IMR-90 (cell line): ENCODE measurements at regions of chr20 and their contacts with region 1.

Region 1: DNA sequence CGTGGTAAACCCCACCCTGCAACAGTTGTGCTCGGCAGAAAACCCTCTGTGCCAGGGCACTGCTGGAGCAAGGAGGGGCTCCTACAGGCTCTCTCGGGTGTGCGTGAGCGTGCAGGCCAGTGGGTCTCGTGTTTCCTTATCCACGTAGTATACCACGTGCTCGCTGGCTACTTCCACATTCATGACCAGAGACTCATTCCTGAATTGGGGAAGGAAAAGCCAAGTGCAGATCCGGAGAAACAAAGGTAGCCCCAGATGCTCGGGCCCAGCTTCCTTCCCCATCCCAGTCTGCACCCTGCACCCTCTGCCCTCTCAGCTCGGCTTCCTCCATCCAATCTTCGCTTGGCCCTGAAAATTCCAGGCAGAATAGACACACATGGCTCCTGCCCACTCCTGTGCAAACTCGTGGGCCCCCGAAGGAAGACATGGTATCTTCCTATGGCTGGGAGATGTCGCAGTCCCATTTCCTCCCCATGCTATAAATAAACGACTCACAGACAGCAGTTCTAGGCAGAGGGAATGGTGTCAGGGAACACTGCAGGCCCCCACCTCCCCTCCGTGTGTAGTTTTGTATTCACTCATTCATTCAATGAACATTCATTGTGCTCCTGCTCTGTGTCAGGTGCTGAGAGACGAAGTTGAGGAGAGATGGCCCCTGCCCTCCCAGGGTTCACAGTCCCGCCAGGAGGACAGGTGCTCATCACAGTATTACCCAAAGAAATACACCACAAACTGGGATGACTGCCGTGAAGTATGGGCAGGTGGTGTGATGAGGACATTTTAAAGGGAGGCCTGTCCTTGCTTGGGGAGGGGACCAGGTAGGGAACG is 29.6 kb downstream of the NPEPL1 start:
- DNase-seq: no peak
- ATAC-seq: no peak
- H3K4me3 ChIP-seq: no peak overlapping the region
- H3K27ac ChIP-seq: no peak overlapping the region
- H3K4me1 ChIP-seq: no peaks in the 10 kb centered on the region
- H3K27me3 ChIP-seq: peaks cover 37% of the 10 kb centered on the region
- CTCF ChIP-seq: no peak
- POLR2A ChIP-seq: no peak
- RAD21 ChIP-seq: no peak

Region 2: DNA sequence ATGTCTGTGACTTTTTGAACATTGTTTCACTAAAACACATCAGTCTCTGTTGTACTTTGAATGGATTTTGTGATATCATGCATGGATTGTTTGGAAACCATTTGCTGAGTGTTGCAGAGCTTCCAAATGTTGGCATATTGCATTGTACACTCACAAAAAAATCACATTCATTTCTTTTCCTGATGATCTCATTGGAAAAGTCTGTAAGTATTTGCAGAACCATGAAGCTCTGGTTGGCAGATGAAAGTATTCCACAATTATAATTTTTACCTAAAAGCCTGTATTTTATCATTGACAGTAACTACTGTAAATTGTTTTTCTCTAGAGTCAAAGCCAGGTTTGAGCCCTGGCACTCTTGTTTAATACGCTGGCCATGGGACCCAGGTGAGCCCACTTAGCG is 291.0 kb before region 1 on chr20:
- CTCF ChIA-PET with region 1: no interaction called
- POLR2A ChIA-PET with region 1: no interaction called
- dilution Hi-C with region 1: no loop called
- in situ Hi-C with region 1: no loop called
- intact Hi-C with region 1: no loop called
- DNase-seq: peak; percentile 55
- ATAC-seq: peak; percentile 39; the same call in 1 of the 2 replicates
- H3K4me3 ChIP-seq: no peak overlapping the region
- H3K27ac ChIP-seq: no peak overlapping the region
- H3K4me1 ChIP-seq: peaks cover 21% of the 10 kb centered on the region
- H3K27me3 ChIP-seq: no peaks in the 10 kb centered on the region
- CTCF ChIP-seq: no peak
- POLR2A ChIP-seq: no peak
- RAD21 ChIP-seq: no peak

Region 3: GRCh38 chr20:58504566-58504965 is 217.6 kb before region 1 on chr20:
- CTCF ChIA-PET with region 1: no interaction called
- POLR2A ChIA-PET with region 1: no interaction called
- dilution Hi-C with region 1: no loop called
- in situ Hi-C with region 1: no loop called
- intact Hi-C with region 1: no loop called
- DNase-seq: no peak
- ATAC-seq: no peak
- H3K4me3 ChIP-seq: no peak overlapping the region
- H3K27ac ChIP-seq: no peak overlapping the region
- H3K4me1 ChIP-seq: no peaks in the 10 kb centered on the region
- H3K27me3 ChIP-seq: no peaks in the 10 kb centered on the region
- CTCF ChIP-seq: no peak
- POLR2A ChIP-seq: no peak
- RAD21 ChIP-seq: no peak

Region 4: DNA sequence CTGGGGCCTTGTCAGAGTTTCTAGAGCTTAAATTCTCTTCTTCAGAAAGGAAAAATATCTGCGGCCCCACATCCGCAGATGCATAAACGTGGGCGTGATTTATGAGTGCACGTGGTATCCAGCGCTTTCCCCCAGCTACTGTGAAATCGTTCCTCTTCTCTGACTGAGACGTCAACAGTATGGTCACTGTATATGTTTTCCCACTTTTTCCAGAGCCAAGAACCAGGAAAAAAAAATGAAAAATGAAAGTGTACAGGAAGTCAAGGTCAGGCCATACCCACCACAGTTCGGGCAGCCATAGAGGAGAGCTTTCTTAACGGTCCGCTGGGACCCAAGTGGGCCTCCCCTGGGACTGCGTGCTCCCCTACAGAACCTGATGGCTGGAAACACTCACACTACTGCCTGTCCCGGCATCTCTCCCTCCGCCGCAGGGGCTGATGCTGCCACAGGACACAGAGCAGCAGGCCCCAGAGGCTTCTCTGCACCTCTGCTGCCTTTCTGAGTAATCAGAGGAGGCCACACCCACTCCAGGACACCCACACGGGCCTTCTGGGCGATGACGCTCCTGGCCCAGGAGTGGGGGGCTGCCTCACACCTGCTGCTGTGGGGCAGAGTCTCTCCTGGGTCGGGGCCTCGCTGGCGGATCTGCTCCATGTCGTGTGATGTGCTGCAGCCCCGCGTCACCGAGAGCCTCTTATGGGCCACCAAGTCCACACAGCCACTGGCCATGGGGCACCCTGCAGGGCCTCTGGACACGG is 87.5 kb before region 1 on chr20:
- CTCF ChIA-PET with region 1: no interaction called
- POLR2A ChIA-PET with region 1: no interaction called
- dilution Hi-C with region 1: no loop called
- in situ Hi-C with region 1: no loop called
- intact Hi-C with region 1: no loop called
- DNase-seq: peak; percentile 92
- ATAC-seq: peak; percentile 73
- H3K4me3 ChIP-seq: no peak overlapping the region
- H3K27ac ChIP-seq: peak overlapping the region; percentile 36
- H3K4me1 ChIP-seq: peaks cover 16% of the 10 kb centered on the region
- H3K27me3 ChIP-seq: no peaks in the 10 kb centered on the region
- CTCF ChIP-seq: no peak
- POLR2A ChIP-seq: peak; percentile 33
- RAD21 ChIP-seq: 0 out of 2 replicates have a peak, but pooled peaks have one; percentile 15

Region 5: GRCh38 chr20:58705567-58705926 is 16.6 kb before region 1 on chr20:
- CTCF ChIA-PET with region 1: no interaction called
- POLR2A ChIA-PET with region 1: no interaction called
- dilution Hi-C with region 1: no loop called
- in situ Hi-C with region 1: no loop called
- intact Hi-C with region 1: loop called (anchors 1 kb)
- DNase-seq: no peak
- ATAC-seq: no peak
- H3K4me3 ChIP-seq: no peak overlapping the region
- H3K27ac ChIP-seq: no peak overlapping the region
- H3K4me1 ChIP-seq: peaks cover 2% of the 10 kb centered on the region; the same call in 1 of the 2 replicates
- H3K27me3 ChIP-seq: no peaks in the 10 kb centered on the region
- CTCF ChIP-seq: no peak
- POLR2A ChIP-seq: no peak
- RAD21 ChIP-seq: no peak